ENCODE measurements at regions of chr9 and their contacts with region 1.

Region 1: DNA sequence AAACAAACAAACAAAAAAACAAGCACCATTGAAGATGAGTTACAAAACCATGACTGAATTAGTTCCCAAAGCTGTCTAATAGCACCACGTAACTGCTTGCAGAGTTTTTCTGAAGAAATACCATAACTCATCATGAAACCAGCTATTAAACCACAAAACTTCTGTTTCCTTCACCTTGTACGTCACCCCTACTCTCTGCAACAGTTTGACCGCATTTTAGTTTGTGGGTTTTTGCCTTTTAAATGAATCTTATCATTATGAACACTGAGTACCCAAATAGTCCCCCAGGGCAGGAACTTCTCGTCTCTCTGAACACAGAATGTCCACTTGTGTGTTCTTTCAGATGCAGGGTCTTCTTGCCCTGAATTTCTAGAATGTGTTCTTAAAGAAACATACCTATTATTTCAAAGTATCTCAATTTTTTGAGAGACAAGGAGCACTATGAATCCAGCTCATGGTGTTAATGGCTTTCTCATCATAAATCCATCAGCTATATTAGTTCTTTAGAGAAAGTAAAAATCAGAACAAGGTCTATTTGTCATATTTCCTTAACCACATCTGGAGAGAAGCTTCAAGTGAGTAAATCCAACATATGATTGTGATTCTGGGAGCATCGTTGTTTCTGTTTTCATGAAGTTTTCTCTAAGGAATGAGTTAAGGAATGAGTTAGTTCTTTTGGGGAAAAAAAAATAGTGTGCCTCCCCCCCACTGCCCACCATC is 210.6 kb downstream of the AUH start:
- DNase-seq: peak; percentile 70
- H3K4me3 Mint-ChIP-seq: peak overlapping the region; percentile 13
- H3K27ac Mint-ChIP-seq: peak overlapping the region; percentile 94
- H3K4me1 Mint-ChIP-seq: peaks cover 95% of the 10 kb centered on the region
- H3K27me3 Mint-ChIP-seq: no peaks in the 10 kb centered on the region

Region 2: GRCh38 chr9:91047993-91048607 is 103.1 kb before region 1 on chr9:
- intact Hi-C with region 1: loop called (anchors 1 kb)
- DNase-seq: peak; percentile 31
- H3K4me3 Mint-ChIP-seq: peak overlapping the region; percentile 65
- H3K27ac Mint-ChIP-seq: peak overlapping the region; percentile 92
- H3K4me1 Mint-ChIP-seq: peaks cover 67% of the 10 kb centered on the region
- H3K27me3 Mint-ChIP-seq: peaks cover 4% of the 10 kb centered on the region

Region 3: GRCh38 chr9:91101611-91102168 is 49.5 kb before region 1 on chr9:
- intact Hi-C with region 1: loop called (anchors 1 kb)
- DNase-seq: peak; percentile 85
- H3K4me3 Mint-ChIP-seq: peak overlapping the region; percentile 53
- H3K27ac Mint-ChIP-seq: peak overlapping the region; percentile 85
- H3K4me1 Mint-ChIP-seq: peaks cover 72% of the 10 kb centered on the region
- H3K27me3 Mint-ChIP-seq: peaks cover 8% of the 10 kb centered on the region

Region 4: GRCh38 chr9:91177661-91178280 is 26.6 kb after region 1 on chr9:
- intact Hi-C with region 1: loop called (anchors 1 kb)
- DNase-seq: no peak
- H3K4me3 Mint-ChIP-seq: peak overlapping the region; percentile 35
- H3K27ac Mint-ChIP-seq: peak overlapping the region; percentile 96
- H3K4me1 Mint-ChIP-seq: peaks cover 71% of the 10 kb centered on the region
- H3K27me3 Mint-ChIP-seq: no peaks in the 10 kb centered on the region

Region 5: DNA sequence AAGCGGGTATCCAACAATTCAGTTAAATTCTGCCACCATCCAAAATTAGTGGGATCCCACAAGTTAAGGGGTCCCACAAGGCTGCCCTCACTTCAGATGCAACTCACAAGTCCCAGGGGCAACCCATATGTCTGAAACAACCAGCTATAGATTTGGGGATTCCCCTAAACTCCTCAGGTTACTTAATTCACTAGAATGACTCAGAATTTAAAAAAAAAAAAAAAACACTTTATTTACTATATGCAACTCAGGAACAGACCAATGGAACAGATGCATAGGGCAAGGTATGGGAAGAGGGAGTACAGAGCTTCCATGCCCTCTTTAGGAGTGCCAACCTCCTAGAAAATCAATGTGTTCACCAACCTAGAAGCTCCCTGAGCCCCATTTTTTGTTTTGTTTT is 195.5 kb after region 1 on chr9:
- intact Hi-C with region 1: loop called (anchors 1 kb)
- DNase-seq: no peak
- H3K4me3 Mint-ChIP-seq: no peak overlapping the region
- H3K27ac Mint-ChIP-seq: peak overlapping the region; percentile 67
- H3K4me1 Mint-ChIP-seq: peaks cover 56% of the 10 kb centered on the region
- H3K27me3 Mint-ChIP-seq: no peaks in the 10 kb centered on the region

Region 6: DNA sequence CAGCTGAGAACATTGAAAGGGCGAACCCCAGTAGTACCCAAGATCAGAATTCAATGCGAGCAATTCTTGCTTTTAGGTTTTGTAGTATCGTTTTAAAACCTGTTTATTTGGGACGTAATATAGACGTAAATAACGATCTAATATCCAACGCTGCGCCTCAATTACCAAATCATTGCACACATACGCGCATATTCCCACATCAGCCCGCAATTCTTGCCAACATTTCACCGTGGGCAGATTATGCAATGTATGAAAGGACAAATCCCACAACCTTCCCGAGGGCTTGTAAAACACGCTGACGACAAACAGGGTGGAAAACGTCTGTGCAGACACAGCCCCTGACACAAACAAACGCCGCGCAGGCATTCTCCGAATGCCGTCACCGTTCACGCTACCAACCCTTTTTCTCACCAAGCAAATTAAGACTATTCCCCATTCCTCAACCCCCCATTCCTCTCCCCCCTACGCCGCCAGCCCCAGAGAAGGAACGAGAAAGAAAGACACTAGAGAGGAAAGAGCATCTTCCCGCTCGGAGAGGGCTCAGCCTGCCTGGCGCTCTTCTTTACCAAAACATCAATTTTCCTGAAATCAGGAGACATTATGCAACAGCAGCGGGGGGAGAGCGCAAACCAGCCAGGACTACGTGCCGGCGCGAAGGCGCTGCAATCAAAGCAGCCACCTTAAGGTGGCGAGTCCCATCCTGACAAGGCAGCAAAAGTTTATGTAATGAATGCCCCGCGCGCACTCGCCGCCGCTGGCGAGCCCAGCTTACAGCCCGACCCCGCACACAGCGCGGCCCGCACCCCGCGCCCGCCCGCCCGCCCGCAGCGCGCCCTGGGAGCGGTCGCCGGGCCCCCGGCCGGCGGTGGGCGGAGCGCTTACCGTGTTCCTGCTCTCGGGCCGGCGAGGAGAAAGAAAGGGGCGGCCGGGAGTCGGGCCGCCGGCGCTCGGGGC is 271.9 kb after region 1 on chr9:
- intact Hi-C with region 1: loop called (anchors 1 kb)
- DNase-seq: peak; percentile 51
- H3K4me3 Mint-ChIP-seq: peak overlapping the region; percentile 98
- H3K27ac Mint-ChIP-seq: peak overlapping the region; percentile 96
- H3K4me1 Mint-ChIP-seq: peaks cover 63% of the 10 kb centered on the region
- H3K27me3 Mint-ChIP-seq: peaks cover 1% of the 10 kb centered on the region

Region 7: DNA sequence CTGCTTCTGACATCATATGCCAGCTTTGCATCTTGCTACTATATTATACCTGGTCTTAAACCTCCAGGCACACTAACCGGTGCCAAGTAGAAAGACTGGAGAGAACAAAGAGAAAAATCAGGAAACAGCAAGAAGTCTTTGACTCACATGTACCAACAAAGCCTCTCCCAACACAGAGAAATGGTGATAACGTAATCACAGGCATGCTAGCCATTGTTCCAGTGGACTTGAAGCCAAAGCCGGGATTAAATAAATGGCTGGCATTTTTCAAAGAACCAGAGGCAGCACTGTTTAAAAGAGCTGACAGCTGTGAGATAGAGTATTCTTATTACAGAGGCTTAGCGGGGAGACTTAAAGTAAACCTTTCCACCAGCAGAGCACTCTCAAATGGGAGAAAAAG is 420.9 kb after region 1 on chr9:
- intact Hi-C with region 1: no loop called
- DNase-seq: no peak
- H3K4me3 Mint-ChIP-seq: no peak overlapping the region
- H3K27ac Mint-ChIP-seq: no peak overlapping the region
- H3K4me1 Mint-ChIP-seq: no peaks in the 10 kb centered on the region
- H3K27me3 Mint-ChIP-seq: peaks cover 6% of the 10 kb centered on the region

Measured in activated T-helper 1 cell treated with anti-CD3 and anti-CD28 coated beads, Interleukin-12 subunit alpha, Interleukin-12 subunit beta, Interleukin-2, Interleukin-4 antibody, amounts not matched to agents 30 ng/mL and 10 ng/mL and 1 ng/mL, durations not matched to agents 14 hours and 24 hours and 36 hours (primary cell).